Right cardiac atrium (tissue), 5 donors: ENCODE measurements at regions of chr1 and their contacts with region 1.

Region 1: GRCh38 chr1:27725374-27726173 is at the start of gene FAM76A:
- DNase-seq: peak; percentile 99 to 100 (median 100)
- ATAC-seq: peak; percentile 97 to 98
- H3K4me3 ChIP-seq: peak within 1 kb of the TSS; percentile 93
- H3K27ac ChIP-seq: peak within 1 kb of the TSS; percentile 92
- H3K4me1 ChIP-seq: no peaks in the 10 kb centered on the region
- H3K27me3 ChIP-seq: no peaks in the 10 kb centered on the region
- total RNA-seq, gene FAM76A: 12.1 to 14.5 (median 12.9) TPM

Region 2: GRCh38 chr1:27145934-27146354 is 579.6 kb before region 1 on chr1:
- intact Hi-C with region 1: no loop called
- DNase-seq: no peak
- ATAC-seq: peak in 1 of 2 donors; percentile 65
- H3K4me3 ChIP-seq: no peak overlapping the region
- H3K27ac ChIP-seq: peak overlapping the region; percentile 91
- H3K4me1 ChIP-seq: peaks cover 34% of the 10 kb centered on the region
- H3K27me3 ChIP-seq: no peaks in the 10 kb centered on the region

Region 3: DNA sequence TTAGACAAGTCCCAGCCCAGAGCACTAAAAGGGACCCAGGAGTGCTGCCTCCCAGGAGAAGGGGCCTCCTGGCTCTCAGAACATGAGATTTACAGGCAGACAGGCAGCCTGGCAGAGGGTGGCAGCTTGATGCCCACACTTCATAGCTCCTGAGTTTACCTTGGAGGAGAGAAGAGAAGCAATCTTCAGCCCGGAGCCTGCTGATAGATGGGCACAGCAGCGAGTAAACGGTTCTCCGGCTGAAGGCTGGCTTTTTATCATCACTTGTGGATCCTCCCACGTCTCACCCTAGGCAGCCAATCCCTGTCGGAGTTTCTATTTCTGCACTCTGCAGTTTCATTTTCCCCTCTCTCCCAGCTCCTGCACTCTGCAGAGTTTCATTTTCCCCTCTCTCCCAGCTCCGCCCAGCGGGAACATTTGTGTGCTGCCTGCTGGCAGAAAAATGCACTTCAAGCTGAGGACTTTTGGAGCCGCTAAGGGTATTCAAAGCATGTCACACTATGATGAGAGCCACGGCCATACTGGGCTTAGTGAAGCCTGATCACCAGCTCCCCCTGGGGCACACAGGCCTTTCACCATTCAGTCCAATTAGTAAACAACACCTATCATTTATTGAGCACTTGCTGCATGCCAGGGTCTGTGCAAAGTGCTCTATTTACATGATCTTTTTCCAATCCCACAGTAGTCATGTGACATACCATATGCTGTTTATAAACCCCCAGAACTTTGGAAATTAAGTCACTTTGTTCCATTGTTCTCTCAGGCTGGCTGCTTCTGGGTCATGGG is 53.4 kb before region 1 on chr1 and contains the start of gene IFI6:
- intact Hi-C with region 1: loop called in 2 of 4 experiments (anchors 10 kb)
- DNase-seq: peak; percentile 86 to 92 (median 92)
- ATAC-seq: peak; percentile 96 to 97
- H3K4me3 ChIP-seq: peak within 1 kb of the TSS; percentile 79
- H3K27ac ChIP-seq: peak within 1 kb of the TSS; percentile 82
- H3K4me1 ChIP-seq: peaks cover 3% of the 10 kb centered on the region
- H3K27me3 ChIP-seq: no peaks in the 10 kb centered on the region
- total RNA-seq, gene IFI6: 46.2 to 145 (median 57.8) TPM

Region 4: DNA sequence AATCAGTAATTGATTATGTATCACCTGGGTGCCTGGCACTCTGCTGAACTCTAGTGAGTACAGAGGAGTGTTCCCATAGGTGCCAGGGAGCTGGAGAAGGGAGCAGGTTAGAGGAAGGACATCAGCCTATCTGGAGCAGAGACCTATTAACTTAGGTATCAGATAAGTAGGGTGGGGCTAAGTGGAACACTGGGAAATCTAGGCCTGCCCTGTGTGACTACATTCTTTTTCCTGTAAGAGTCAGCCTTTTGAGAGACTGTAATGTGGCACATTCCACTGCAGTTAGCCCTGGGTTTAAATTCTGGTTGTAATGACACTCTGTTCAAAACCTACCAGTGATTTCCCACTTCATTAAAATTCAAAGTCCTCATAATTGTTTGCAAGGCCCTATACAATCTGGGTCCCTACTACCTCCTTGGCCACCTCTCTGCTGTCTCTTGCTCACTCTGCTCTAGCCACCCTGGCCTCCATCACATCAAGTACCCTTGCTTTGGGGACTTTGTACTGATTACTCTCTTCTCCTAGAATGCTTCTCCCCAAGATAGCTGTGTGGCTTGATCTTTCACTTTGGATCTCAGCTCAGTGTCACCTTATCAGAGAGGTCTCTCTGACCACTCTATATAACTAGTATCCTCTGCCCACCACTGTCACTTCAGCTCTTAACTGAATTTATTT is 60.3 kb after region 1 on chr1:
- intact Hi-C with region 1: no loop called
- DNase-seq: no peak
- ATAC-seq: peak; percentile 41 to 82
- H3K4me3 ChIP-seq: no peak overlapping the region
- H3K27ac ChIP-seq: no peak overlapping the region
- H3K4me1 ChIP-seq: peaks cover 8% of the 10 kb centered on the region
- H3K27me3 ChIP-seq: no peaks in the 10 kb centered on the region